ENCODE measurements at regions of chr1 and their contacts with region 1.

Region 1: DNA sequence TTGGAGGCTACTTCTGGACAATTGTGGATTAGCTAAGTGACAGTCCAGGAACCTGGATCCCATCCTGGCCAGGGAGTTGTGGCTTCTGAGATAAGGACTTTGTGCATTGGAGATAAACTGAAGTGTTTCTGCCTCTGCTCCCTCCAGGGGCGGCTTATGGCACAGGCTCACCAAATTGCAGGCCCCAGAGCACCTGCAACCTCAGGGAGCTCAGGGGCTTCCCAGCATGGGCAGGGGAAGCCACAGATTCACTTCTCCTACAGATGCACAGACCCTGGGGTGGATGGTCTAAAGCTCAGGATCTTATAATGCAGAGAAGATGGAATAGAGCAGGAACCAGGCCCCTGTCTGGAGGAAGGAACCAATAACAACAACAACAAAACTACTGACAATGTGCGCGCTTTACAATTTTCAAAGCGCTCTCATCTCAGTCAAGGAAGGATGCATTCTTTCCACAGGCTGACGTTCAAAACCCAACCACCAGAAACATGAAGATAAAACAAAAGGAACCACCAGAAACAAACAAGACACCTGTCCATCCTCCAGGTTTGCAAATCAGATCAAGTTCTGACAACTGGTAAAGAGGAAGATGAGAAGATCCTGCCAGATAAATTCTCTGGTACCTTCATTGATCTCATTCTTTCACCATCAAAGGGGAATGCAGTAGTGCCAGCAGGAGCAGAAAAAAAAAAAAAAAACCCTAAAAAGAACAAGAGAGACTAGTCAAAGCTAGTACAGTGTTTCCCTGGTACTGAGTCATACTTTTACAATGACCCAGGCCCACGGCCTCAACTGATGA is 121.0 kb upstream of the IRF2BP2 start:
- DNase-seq: peak; percentile 49
- H3K4me3 Mint-ChIP-seq: peak overlapping the region; percentile 55
- H3K27ac Mint-ChIP-seq: peak overlapping the region; percentile 97
- H3K4me1 Mint-ChIP-seq: peaks cover 75% of the 10 kb centered on the region
- H3K27me3 Mint-ChIP-seq: no peaks in the 10 kb centered on the region

Region 2: DNA sequence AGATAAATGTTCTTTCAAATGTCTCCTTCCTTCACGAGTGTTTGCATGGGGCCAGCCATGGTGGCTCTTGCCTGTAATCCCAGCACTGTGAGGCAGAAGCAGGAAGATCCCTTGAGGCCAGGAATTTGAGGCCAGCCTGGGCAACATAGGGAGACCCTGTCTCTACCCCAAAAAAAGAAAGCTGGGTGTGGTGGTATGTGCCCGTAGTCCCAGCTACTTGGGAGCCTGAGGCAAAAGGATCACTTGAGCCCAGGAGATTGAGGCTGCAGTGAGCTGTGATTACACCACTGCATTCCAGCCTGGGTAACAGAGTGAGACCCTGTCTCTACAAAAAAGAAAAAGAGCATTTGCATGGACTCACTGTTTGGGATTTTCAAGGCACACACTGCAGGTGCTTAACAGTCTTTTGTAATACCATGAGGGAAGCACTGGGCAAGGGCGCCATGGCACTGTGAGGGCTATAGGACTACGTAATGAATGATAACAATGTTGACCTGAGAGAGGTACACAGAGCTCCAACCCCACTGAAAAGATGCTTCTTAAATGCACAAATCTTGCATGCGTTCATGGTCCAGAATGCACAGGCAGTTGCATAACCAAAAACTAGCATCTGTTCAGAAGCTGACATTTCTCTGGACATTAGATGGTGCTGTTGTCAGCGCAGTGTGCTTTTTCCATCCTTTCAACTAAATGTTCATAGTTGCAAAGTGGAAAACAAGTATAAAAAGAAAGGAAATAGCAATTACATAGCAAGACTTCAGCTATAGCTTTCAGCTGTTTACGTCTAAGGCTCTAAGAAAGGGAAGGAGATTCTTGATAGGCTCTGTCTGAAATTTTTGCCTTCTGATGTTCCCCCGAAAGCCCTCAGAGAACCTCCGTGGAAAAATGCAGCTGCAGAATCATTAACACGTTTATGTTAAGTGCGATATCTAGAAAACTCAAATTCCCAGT is 244.2 kb before region 1 on chr1:
- intact Hi-C with region 1: loop called (anchors 1 kb)
- DNase-seq: peak; percentile 31
- H3K4me3 Mint-ChIP-seq: peak overlapping the region; percentile 34
- H3K27ac Mint-ChIP-seq: peak overlapping the region; percentile 97
- H3K4me1 Mint-ChIP-seq: peaks cover 49% of the 10 kb centered on the region
- H3K27me3 Mint-ChIP-seq: peaks cover 16% of the 10 kb centered on the region

Region 3: GRCh38 chr1:234716908-234717375 is 14.0 kb before region 1 on chr1:
- intact Hi-C with region 1: no loop called
- DNase-seq: no peak
- H3K4me3 Mint-ChIP-seq: no peak overlapping the region
- H3K27ac Mint-ChIP-seq: no peak overlapping the region
- H3K4me1 Mint-ChIP-seq: peaks cover 20% of the 10 kb centered on the region
- H3K27me3 Mint-ChIP-seq: no peaks in the 10 kb centered on the region

Region 4: DNA sequence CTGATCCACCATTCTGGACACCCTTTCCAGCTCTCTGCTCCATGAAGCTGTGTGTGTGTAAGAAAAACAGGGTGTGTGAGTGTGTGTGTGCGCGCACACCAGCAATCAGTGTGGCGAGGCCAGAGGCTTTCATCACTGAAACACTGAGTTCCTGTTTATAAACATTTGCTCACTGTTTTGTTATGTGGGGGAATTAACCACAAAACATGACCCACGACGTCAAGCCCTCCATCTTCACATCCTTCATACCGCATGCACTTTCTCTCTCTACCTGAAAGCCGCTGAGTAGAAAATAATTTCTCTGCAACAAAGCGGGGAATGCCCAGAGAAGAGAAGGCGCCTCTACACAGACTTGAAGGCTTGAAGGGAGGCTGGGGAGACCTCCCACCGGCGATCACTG is 27.9 kb after region 1 on chr1:
- intact Hi-C with region 1: loop called (anchors 1 kb)
- DNase-seq: peak; percentile 49
- H3K4me3 Mint-ChIP-seq: peak overlapping the region; percentile 42
- H3K27ac Mint-ChIP-seq: peak overlapping the region; percentile 73
- H3K4me1 Mint-ChIP-seq: peaks cover 59% of the 10 kb centered on the region
- H3K27me3 Mint-ChIP-seq: peaks cover 10% of the 10 kb centered on the region

Region 5: GRCh38 chr1:234875953-234876855 is 145.2 kb after region 1 on chr1:
- intact Hi-C with region 1: loop called (anchors 1 kb)
- DNase-seq: no peak
- H3K4me3 Mint-ChIP-seq: peak overlapping the region; percentile 11
- H3K27ac Mint-ChIP-seq: peak overlapping the region; percentile 88
- H3K4me1 Mint-ChIP-seq: peaks cover 55% of the 10 kb centered on the region
- H3K27me3 Mint-ChIP-seq: no peaks in the 10 kb centered on the region

Region 6: GRCh38 chr1:234978397-234979295 is 247.7 kb after region 1 on chr1:
- intact Hi-C with region 1: loop called (anchors 2 kb)
- DNase-seq: no peak
- H3K4me3 Mint-ChIP-seq: peak overlapping the region; percentile 83
- H3K27ac Mint-ChIP-seq: peak overlapping the region; percentile 92
- H3K4me1 Mint-ChIP-seq: peaks cover 88% of the 10 kb centered on the region
- H3K27me3 Mint-ChIP-seq: no peaks in the 10 kb centered on the region

Region 7: GRCh38 chr1:235011599-235012435 is 280.8 kb after region 1 on chr1:
- intact Hi-C with region 1: loop called (anchors 1 kb)
- DNase-seq: peak; percentile 97
- H3K4me3 Mint-ChIP-seq: peak overlapping the region; percentile 40
- H3K27ac Mint-ChIP-seq: peak overlapping the region; percentile 95
- H3K4me1 Mint-ChIP-seq: peaks cover 88% of the 10 kb centered on the region
- H3K27me3 Mint-ChIP-seq: peaks cover 5% of the 10 kb centered on the region

Measured in activated T-helper 1 cell treated with anti-CD3 and anti-CD28 coated beads, Interleukin-12 subunit alpha, Interleukin-12 subunit beta, Interleukin-2, Interleukin-4 antibody, amounts not matched to agents 30 ng/mL and 10 ng/mL and 1 ng/mL, durations not matched to agents 14 hours and 24 hours and 36 hours (primary cell).